CD4-positive, alpha-beta memory T cell (primary cell): ENCODE measurements at regions of chr3 and their contacts with region 1.

Region 1: GRCh38 chr3:32120471-32120870 is 14.1 kb downstream of the GPD1L start:
- DNase-seq: no peak
- H3K4me3 ChIP-seq: no peak overlapping the region
- H3K4me3 Mint-ChIP-seq: no peak overlapping the region
- H3K27ac ChIP-seq: no peak overlapping the region
- H3K27ac Mint-ChIP-seq: no peak overlapping the region
- H3K4me1 ChIP-seq: peaks cover 38% of the 10 kb centered on the region
- H3K4me1 Mint-ChIP-seq: peaks cover 34 to 58% (median 43%) of the 10 kb centered on the region in 4 donors
- H3K27me3 ChIP-seq: no peaks in the 10 kb centered on the region
- H3K27me3 Mint-ChIP-seq: no peaks in the 10 kb centered on the region

Region 2: DNA sequence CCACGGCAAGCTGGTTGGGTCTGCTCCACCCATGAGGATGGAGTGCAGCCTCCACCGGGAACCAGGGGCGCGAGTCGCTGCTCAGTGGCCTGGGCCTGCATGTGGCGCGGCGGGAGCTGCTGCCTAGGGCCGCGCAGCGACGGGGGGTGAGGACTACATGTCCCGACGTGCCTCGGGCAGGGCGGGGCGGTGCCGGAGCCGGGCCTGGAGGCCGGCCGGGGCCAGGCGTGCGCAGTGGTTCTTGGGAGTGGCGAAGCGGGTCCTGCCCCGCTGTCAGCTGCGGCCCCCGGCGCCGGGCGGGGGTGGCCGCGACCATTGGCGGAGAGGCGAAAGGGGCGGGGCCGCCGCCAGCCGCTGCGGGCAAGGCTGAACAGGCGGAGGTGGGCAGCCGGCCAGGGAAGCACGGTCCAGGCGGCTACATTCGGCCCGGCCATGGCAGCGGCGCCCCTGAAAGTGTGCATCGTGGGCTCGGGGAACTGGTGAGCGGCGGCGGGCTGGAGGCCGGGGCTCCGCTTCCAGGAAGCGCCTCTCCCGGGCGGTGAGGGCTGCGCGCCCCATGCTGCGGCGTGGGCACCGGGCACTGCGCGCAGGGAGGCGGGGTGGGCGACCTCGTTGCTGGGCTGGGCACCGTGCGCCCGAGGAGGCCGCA is 14.1 kb before region 1 on chr3 and contains the start of gene GPD1L:
- CTCF ChIA-PET with region 1: interaction called, 10 read pairs
- POLR2A ChIA-PET with region 1: interaction called, 34 read pairs
- intact Hi-C with region 1: loop called (anchors 2 kb)
- DNase-seq: peak; percentile 88 to 91 (median 90)
- H3K4me3 ChIP-seq: peak within 1 kb of the TSS; percentile 12 to 87
- H3K4me3 Mint-ChIP-seq: peak within 1 kb of the TSS; percentile 94 to 98 (median 97)
- H3K27ac ChIP-seq: peak within 1 kb of the TSS; percentile 61
- H3K27ac Mint-ChIP-seq: peak within 1 kb of the TSS; percentile 75 to 95 (median 91)
- H3K4me1 ChIP-seq: peaks cover 33% of the 10 kb centered on the region
- H3K4me1 Mint-ChIP-seq: peaks cover 25 to 49% (median 36%) of the 10 kb centered on the region in 4 donors
- H3K27me3 ChIP-seq: no peaks in the 10 kb centered on the region
- H3K27me3 Mint-ChIP-seq: no peaks in the 10 kb centered on the region
- total RNA-seq, gene GPD1L: 22.7 to 32.5 TPM